HepG2 (cell line): ENCODE measurements at regions of chr3 and their contacts with region 1.

Region 1: DNA sequence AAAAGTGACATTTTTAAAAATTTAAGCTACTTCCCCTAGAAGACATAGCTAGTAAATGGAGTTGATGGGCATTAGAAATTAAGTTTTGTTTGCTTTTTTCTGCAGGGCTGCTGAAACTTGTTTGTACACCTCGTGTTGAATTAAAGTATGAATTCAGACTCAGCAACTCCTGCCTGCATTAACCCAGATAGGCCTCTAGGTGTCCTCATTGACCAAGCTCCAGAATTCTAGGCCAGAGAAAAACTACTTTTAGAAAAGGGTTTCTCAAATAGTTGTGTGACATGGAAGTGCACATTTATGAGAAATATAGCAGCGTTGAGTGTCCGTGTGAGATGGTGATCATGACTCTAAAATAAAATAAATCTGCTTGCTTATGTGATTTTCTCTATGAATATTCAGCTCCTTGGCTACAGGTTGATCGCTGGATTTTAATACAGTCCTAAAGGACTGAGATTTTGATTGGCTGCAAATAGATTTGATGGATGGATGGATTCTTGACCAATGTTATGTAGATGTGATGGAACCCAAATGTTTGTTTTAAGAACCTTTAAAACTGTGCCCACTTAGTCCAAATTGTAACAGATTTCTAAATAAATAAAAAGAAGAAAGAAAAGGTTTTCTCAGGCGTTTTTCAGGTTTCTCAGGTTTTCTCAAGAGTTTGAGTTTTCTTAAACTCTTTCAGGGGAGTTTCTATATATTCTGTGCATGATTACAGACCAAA is 39.4 kb upstream of the LMOD3 start:
- DNase-seq: peak; percentile 43
- ATAC-seq: peak; percentile 24; the same call in 1 of the 3 replicates
- H3K4me3 ChIP-seq: no peak overlapping the region
- H3K27ac ChIP-seq: no peak overlapping the region
- H3K4me1 ChIP-seq: no peaks in the 10 kb centered on the region
- H3K27me3 ChIP-seq: no peaks in the 10 kb centered on the region
- CTCF ChIP-seq: peak; percentile 83
- EP300 ChIP-seq: no peak
- POLR2A ChIP-seq: no peak
- RAD21 ChIP-seq: peak; percentile 87

Region 2: DNA sequence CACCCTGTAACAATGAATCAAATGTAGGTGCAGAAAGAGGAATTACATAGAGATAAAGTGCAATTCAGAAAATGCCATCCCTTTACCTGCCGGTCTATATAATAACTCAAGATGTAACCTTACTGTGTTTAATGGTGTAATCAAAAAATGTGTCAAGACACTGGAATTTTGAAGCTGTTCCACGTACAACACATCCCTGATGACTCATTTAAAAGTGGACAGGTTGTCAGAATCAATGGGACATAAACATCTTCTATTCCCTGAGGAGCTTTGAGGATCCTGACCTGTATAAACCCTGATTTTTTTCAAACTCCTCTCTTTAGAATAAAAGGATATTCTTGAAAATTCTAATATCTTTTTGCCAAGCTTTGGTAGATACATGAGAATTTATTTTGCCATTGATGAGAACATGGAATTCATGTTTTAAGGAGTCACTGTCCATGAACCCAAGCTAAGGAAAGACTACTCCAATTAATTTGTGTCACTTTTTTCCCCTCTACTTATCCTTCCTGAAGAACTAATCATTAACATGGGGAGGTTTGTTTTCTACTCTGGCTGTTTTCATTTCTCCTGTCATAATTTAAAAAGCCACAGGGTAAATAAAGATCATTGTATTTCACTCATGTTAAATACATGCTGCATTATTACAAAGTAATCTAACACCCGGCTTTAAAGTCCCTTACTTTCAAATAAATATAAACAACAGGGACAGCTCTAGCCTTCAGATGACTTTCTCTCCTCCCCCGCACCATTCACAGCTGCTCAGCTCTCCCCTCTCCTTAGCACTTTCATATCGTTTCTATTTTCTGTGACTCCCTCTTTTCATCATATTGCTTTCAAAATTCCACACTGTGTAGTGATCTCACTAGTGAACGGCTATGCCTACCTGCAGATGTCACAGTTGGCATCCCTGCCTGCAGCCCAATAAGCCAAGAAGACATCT is 367.7 kb before region 1 on chr3:
- CTCF ChIA-PET with region 1: no interaction called
- POLR2A ChIA-PET with region 1: no interaction called
- in situ Hi-C with region 1: no loop called
- intact Hi-C with region 1: no loop called
- DNase-seq: no peak
- ATAC-seq: no peak
- H3K4me3 ChIP-seq: no peak overlapping the region
- H3K27ac ChIP-seq: no peak overlapping the region
- H3K4me1 ChIP-seq: no peaks in the 10 kb centered on the region
- H3K27me3 ChIP-seq: no peaks in the 10 kb centered on the region
- CTCF ChIP-seq: no peak
- EP300 ChIP-seq: no peak
- POLR2A ChIP-seq: no peak
- RAD21 ChIP-seq: no peak

Region 3: DNA sequence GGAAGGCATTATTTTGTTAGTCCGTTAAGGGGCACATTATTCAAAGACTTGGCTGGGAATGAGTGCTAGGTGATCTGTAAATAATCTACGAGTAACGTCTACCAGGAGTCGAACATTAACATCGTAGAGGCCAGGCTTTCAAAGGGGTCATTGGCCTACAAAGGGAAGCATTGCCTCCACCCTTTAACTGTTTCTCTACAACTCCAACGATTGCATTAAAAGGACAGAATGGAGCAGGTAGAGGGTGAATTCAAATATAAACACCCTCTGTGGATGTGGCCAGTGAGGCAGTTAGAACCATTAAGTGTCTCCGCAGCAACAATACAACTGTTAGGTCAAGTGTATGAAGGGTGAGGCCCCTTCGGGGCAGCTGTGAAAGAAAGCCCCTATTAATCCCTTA is 86.7 kb after region 1 on chr3:
- CTCF ChIA-PET with region 1: no interaction called
- POLR2A ChIA-PET with region 1: no interaction called
- in situ Hi-C with region 1: no loop called
- intact Hi-C with region 1: loop called (anchors 5 kb)
- DNase-seq: peak; percentile 10
- ATAC-seq: peak; percentile 88
- H3K4me3 ChIP-seq: no peak overlapping the region; a peak in 1 of 6 replicates
- H3K27ac ChIP-seq: no peak overlapping the region
- H3K4me1 ChIP-seq: peaks cover 24% of the 10 kb centered on the region
- H3K27me3 ChIP-seq: peaks cover 0 to 5% of the 10 kb centered on the region in 2 experiments; a peak in 3 of 5 replicates
- CTCF ChIP-seq: no peak
- EP300 ChIP-seq: no peak
- POLR2A ChIP-seq: no peak
- RAD21 ChIP-seq: no peak

Region 4: DNA sequence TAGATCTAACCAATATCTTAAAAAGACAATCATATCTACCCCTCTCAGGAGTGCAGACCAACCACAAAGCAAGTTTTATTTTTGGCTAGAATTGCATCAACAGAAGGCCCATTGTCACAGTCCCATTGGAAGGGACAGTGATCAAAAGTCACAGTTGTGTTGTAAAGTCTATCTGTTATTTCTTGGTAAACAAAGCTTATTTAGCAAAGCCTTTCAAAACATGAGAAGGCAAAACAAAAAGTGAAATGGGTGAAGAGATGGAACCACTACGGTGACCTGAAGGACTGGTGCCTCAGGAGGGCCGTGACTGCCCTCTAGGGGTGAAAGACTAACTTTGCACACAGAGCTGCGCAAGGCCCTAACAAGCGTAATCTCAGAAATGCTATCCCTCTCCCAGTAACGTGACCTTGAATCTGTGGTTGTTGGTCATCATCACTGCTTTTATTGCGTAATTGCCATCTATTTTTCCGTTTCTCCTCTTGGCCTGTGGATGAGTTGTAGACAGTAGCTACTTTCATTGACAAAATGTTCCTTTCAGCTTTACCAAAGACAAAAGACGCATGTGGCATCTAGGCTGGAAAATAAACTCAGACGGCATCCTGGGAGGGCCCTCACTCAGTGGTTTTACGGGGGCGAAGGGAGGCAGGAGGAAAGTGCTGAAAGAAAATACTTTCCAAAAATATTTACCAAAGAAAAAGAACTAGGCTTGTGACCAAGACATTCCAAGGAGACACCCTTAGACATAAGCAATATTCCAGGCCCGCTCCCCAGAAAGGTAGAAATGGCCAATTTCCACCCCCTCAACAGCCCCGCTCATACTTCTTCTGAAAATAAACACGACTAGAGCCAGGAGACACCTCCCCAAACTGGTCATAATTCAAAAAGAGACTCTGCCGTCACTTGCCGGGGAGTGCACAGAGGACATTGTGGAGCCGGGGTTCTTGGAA is 144.8 kb after region 1 on chr3:
- CTCF ChIA-PET with region 1: interaction called, 52 read pairs
- POLR2A ChIA-PET with region 1: no interaction called
- in situ Hi-C with region 1: loop called (anchors 5 kb)
- intact Hi-C with region 1: loop called (anchors 1 kb)
- DNase-seq: peak; percentile 80
- ATAC-seq: peak; percentile 97
- H3K4me3 ChIP-seq: no peak overlapping the region
- H3K27ac ChIP-seq: no peak overlapping the region
- H3K4me1 ChIP-seq: no peaks in the 10 kb centered on the region
- H3K27me3 ChIP-seq: peaks cover 0 to 7% of the 10 kb centered on the region in 2 experiments; a peak in 2 of 5 replicates
- CTCF ChIP-seq: peak; percentile 95
- EP300 ChIP-seq: no peak
- POLR2A ChIP-seq: no peak
- RAD21 ChIP-seq: peak; percentile 86

Region 5: GRCh38 chr3:69410250-69410649 is 248.5 kb after region 1 on chr3:
- CTCF ChIA-PET with region 1: interaction called, 14 read pairs
- POLR2A ChIA-PET with region 1: no interaction called
- in situ Hi-C with region 1: loop called (anchors 25 kb)
- intact Hi-C with region 1: loop called (anchors 1 kb)
- DNase-seq: peak; percentile 48
- ATAC-seq: peak; percentile 98
- H3K4me3 ChIP-seq: no peak overlapping the region
- H3K27ac ChIP-seq: no peak overlapping the region
- H3K4me1 ChIP-seq: no peaks in the 10 kb centered on the region
- H3K27me3 ChIP-seq: no peaks in the 10 kb centered on the region; a peak in 1 of 5 replicates
- CTCF ChIP-seq: peak; percentile 77
- EP300 ChIP-seq: no peak
- POLR2A ChIP-seq: no peak
- RAD21 ChIP-seq: no peak

Region 6: GRCh38 chr3:69425261-69425660 is 263.5 kb after region 1 on chr3:
- CTCF ChIA-PET with region 1: interaction called, 3 read pairs
- POLR2A ChIA-PET with region 1: no interaction called
- in situ Hi-C with region 1: loop called (anchors 25 kb)
- intact Hi-C with region 1: loop called (anchors 5 kb)
- DNase-seq: peak; percentile 14
- ATAC-seq: peak; percentile 94
- H3K4me3 ChIP-seq: no peak overlapping the region
- H3K27ac ChIP-seq: no peak overlapping the region
- H3K4me1 ChIP-seq: no peaks in the 10 kb centered on the region
- H3K27me3 ChIP-seq: no peaks in the 10 kb centered on the region
- CTCF ChIP-seq: peak; percentile 59
- EP300 ChIP-seq: no peak
- POLR2A ChIP-seq: no peak
- RAD21 ChIP-seq: no peak